A673 (cell line): ENCODE measurements at regions of chr2 and their contacts with region 1.

Region 1: GRCh38 chr2:202750763-202751427 is 116.1 kb downstream of the FAM117B start:
- DNase-seq: no peak
- H3K4me3 ChIP-seq: no peak overlapping the region
- H3K27ac ChIP-seq: no peak overlapping the region
- H3K4me1 ChIP-seq: no peaks in the 10 kb centered on the region
- H3K27me3 ChIP-seq: no peaks in the 10 kb centered on the region
- CTCF ChIP-seq: no peak

Region 2: DNA sequence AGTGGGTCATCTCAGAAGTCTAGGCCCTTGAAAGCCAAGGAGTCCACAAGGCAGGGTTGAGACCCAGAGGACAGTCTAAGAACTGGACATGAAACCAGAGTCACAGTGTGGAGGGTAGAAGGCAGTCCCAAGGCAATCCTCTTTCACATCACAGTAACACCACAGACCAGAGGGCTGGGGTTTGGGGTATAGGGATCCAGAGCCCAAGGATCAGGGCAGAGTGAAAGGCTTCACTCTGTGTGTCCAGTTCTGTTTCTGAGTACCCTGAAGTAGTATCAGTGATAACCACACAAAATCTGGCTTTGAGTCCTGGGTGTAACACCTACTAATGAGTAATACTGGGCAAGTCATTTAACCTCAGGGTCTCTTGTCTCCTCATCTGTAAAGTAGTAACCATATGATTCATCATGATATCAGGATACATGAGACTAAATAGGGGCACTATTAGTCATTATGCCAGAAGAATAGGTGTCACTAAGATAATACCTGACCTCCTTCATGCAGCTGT is 29.7 kb after region 1 on chr2:
- CTCF ChIA-PET with region 1: no interaction called
- POLR2A ChIA-PET with region 1: interaction called, 12 read pairs
- intact Hi-C with region 1: no loop called
- DNase-seq: no peak
- H3K4me3 ChIP-seq: no peak overlapping the region
- H3K27ac ChIP-seq: no peak overlapping the region
- H3K4me1 ChIP-seq: peaks cover 3% of the 10 kb centered on the region
- H3K27me3 ChIP-seq: no peaks in the 10 kb centered on the region
- CTCF ChIP-seq: no peak

Region 3: GRCh38 chr2:202808754-202809153 is 57.9 kb after region 1 on chr2:
- CTCF ChIA-PET with region 1: interaction called, 10 read pairs
- POLR2A ChIA-PET with region 1: no interaction called
- intact Hi-C with region 1: no loop called
- DNase-seq: no peak
- H3K4me3 ChIP-seq: no peak overlapping the region
- H3K27ac ChIP-seq: no peak overlapping the region
- H3K4me1 ChIP-seq: no peaks in the 10 kb centered on the region
- H3K27me3 ChIP-seq: no peaks in the 10 kb centered on the region
- CTCF ChIP-seq: no peak

Region 4: DNA sequence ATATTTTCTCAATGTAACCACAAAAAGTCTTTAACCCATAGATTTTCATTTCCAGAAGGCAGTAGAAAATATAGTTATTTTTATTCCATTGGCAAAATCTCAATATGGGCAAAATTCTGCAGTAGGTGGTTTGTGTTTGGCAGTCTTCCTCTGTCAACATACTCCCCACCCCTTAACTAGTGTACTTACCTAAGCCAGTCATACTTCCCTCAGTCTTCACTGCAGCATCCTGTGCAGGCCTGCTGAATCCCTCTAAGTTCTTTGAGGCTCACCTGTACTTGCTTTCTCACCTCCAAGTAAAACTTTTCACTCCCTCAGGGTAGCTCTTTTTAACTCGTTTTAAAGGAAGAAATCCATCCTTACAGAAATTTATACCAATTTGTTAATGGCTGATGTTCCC is 168.0 kb after region 1 on chr2:
- CTCF ChIA-PET with region 1: no interaction called
- POLR2A ChIA-PET with region 1: no interaction called
- intact Hi-C with region 1: no loop called
- DNase-seq: no peak
- H3K4me3 ChIP-seq: no peak overlapping the region
- H3K27ac ChIP-seq: no peak overlapping the region
- H3K4me1 ChIP-seq: no peaks in the 10 kb centered on the region
- H3K27me3 ChIP-seq: no peaks in the 10 kb centered on the region
- CTCF ChIP-seq: no peak